Transverse colon (tissue), 4 donors: ENCODE measurements at regions of chr2 and their contacts with region 1.

Region 1: DNA sequence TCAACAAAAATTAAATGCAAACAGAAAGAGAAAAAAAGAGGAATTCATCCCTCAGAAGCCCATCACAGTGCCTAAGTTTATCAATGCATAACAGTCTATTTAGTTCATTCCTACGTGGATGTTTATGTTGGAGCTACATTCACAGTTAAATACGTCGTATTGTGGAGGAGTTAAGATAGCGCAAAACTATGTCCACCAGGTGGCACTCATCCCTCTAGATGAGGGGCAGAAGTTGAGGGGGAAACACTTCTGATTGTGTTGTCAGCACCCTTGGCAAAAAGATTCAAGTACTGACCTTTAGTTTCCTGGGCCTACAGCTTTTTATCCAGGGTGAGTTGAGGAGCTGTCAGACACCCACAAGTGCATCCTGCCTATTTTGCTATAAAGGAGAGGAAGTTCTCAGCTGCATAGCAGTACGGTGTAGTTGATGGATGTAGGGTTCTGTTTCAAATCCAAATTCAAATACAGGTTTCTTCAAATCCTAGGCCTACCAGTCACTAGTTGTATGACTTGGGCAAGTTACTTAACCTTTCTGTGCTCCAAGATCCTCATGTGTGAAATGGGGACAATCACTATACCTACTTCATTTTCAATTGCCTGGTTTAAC is 26.8 kb upstream of the MYO1B start:
- DNase-seq: peak; percentile 41
- H3K4me3 ChIP-seq: no peak overlapping the region
- H3K27ac ChIP-seq: no peak overlapping the region
- H3K4me1 ChIP-seq: peaks cover 0 to 26% (median 18%) of the 10 kb centered on the region in 4 donors
- H3K27me3 ChIP-seq: no peaks in the 10 kb centered on the region
- CTCF ChIP-seq: peak; percentile 40 to 57 (median 52)
- EP300 ChIP-seq: no peak
- POLR2A ChIP-seq: no peak

Region 2: DNA sequence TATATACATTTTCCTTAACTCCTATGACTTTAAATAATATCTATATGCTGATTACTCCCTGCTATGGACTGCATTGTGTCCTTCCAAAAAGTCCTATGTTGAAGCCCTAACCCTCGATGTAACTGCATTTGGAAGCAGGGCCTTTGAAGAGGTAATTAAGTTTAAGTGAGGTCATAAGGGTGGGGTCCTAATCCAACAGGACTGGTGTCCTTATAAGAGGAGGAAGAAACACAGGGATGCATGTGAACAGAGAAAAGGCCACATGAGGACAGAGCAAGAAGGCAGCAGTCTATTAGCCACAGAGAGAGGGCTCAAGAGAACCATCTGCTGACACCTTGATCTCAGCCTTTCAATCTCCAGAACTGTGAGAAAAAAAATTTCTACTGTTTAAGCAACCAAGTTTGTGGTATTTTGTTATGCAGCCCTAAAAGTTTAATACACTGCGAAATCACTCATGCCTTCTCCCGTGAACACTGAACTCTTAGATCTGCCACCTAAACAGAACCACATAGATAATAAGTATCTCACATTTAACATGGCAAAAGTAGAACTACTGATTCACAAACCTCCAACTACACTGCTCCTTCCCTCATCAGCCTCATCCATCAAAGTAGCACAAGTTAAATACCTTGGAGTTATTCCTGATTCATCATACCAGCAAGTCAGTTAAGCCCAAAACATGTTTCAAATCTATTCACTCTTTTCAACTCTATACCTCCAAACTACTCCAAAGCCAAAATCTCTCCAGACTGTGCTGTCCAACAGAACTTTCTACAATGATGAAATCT is 964.1 kb before region 1 on chr2:
- in situ Hi-C with region 1: no loop called
- intact Hi-C with region 1: loop called (anchors 5 kb)
- DNase-seq: no peak
- H3K4me3 ChIP-seq: no peak overlapping the region
- H3K27ac ChIP-seq: no peak overlapping the region
- H3K4me1 ChIP-seq: no peaks in the 10 kb centered on the region
- H3K27me3 ChIP-seq: no peaks in the 10 kb centered on the region
- CTCF ChIP-seq: no peak
- EP300 ChIP-seq: no peak
- POLR2A ChIP-seq: no peak

Region 3: GRCh38 chr2:191150600-191151330 is 67.6 kb before region 1 on chr2 and contains the start of gene STAT4:
- in situ Hi-C with region 1: no loop called
- intact Hi-C with region 1: no loop called
- DNase-seq: peak; percentile 81
- H3K4me3 ChIP-seq: peak within 1 kb of the TSS; percentile 22 to 67 (median 42)
- H3K27ac ChIP-seq: peak within 1 kb of the TSS; percentile 47 to 79 (median 58)
- H3K4me1 ChIP-seq: peaks cover 0 to 15% (median 3%) of the 10 kb centered on the region in 4 donors
- H3K27me3 ChIP-seq: no peaks in the 10 kb centered on the region
- CTCF ChIP-seq: no peak
- EP300 ChIP-seq: no peak
- POLR2A ChIP-seq: peak; percentile 65
- total RNA-seq, gene STAT4: 3.1 to 9.1 TPM in 2 of 4 donors, not detected in the others

Region 4: DNA sequence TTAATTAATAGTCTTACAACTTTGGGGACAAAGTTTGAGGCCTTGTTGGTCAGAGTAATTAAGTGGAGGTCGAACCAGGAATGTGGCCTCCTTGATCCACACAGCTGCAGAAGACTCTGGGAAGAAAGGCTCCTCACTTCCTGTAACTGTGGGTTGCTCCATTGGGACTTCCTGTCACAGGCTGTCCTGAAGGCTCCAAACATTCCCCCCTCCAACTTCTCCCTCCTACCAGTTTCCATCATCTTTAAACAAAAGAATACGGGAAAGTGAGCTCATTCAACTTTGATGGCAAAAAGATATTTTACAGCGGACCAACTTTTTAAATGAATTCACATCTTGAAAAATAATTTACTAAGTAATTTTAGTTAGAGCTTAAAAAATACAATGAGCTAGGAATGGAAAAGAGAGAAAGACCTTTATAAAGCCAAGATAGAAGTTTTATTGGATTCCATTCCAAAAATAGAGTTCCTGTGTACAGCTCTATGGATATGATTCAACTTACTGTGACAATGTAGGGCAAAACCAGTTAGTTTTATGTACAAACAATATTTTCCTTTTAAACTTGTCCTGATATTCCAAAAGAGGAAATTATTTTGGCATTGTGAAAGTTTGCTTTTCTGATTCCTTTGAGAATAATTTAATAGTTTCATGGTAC is 247.5 kb after region 1 on chr2:
- in situ Hi-C with region 1: no loop called
- intact Hi-C with region 1: no loop called
- DNase-seq: no peak
- H3K4me3 ChIP-seq: no peak overlapping the region
- H3K27ac ChIP-seq: no peak overlapping the region
- H3K4me1 ChIP-seq: no peaks in the 10 kb centered on the region
- H3K27me3 ChIP-seq: no peaks in the 10 kb centered on the region
- CTCF ChIP-seq: no peak
- EP300 ChIP-seq: no peak
- POLR2A ChIP-seq: no peak